ENCODE measurements at regions of chr3 and their contacts with region 1.

Region 1: GRCh38 chr3:50388016-50388719 is 28.8 kb upstream of the TMEM115 start:
- DNase-seq: no peak
- H3K4me3 ChIP-seq: no peak overlapping the region
- H3K27ac ChIP-seq: no peak overlapping the region
- H3K4me1 ChIP-seq: peaks cover 0 to 35% (median 20%) of the 10 kb centered on the region in 4 donors
- H3K27me3 ChIP-seq: no peaks in the 10 kb centered on the region
- CTCF ChIP-seq: no peak

Region 2: DNA sequence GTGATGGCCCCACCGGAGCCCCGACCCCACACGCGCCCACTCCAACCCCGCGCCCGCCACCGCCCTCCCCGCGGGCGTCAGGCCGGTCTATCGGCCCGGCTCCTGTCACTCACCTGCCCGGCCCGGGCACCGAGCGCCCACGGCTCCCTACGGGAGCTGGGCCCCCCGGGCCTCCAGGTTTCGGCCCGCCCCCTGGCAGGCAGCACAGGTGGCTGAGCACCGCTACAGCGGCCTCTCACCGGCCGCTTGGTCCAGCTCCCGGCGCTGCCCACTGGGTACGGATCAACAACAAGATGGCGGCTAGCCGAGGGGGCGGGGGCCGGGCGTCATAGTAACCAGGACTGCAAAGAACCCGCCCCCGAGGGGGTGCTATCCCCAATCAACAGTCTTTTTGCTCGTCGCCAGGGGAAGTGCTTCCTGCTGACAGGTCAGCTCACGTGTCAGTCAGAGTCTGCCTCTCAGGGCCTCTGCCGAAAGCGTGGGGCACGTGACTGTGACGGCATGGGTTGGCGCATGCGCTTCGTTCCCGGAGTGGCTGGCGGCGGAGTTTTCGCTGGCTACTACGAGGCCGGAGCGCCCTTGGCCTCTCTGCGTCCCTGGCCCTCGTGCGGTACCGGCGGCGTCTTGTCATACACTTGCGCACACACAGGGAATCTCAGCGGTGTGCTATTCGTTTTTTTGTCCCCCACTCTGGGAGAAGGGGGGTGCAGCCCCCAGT is 601.8 kb before region 1 on chr3 and contains the start of gene IP6K1:
- intact Hi-C with region 1: no loop called
- DNase-seq: peak; percentile 100
- H3K4me3 ChIP-seq: peak within 1 kb of the TSS; percentile 80 to 97
- H3K27ac ChIP-seq: peak within 1 kb of the TSS; percentile 94 to 99
- H3K4me1 ChIP-seq: peaks cover 0 to 48% (median 29%) of the 10 kb centered on the region in 4 donors
- H3K27me3 ChIP-seq: no peaks in the 10 kb centered on the region
- CTCF ChIP-seq: peak in 1 of 2 experiments; percentile 27

Region 3: DNA sequence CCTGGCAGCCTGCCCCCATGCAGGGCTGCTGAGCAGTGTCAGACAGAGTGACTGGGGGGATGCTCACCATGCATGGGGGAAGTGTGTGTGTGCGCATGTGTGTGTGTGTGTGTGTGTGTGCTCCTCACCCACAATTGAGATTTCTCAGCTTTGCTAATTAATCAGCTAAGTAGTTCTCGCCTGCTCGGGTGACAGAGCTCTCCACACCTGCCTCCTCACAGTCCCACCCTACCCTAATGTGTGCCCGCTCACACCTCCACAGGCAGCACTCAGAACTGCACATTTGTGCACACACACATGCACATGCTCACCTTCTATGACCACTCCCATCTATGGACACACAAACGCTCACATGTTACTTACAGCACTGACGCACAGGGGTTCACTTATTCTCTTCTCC is 78.0 kb after region 1 on chr3:
- intact Hi-C with region 1: loop called (anchors 2 kb)
- DNase-seq: no peak
- H3K4me3 ChIP-seq: no peak overlapping the region
- H3K27ac ChIP-seq: no peak overlapping the region
- H3K4me1 ChIP-seq: no peaks in the 10 kb centered on the region
- H3K27me3 ChIP-seq: no peaks in the 10 kb centered on the region
- CTCF ChIP-seq: no peak

Measured in tibial artery (tissue), 4 donors.